ENCODE measurements at regions of chr3 and their contacts with region 1.

Region 1: DNA sequence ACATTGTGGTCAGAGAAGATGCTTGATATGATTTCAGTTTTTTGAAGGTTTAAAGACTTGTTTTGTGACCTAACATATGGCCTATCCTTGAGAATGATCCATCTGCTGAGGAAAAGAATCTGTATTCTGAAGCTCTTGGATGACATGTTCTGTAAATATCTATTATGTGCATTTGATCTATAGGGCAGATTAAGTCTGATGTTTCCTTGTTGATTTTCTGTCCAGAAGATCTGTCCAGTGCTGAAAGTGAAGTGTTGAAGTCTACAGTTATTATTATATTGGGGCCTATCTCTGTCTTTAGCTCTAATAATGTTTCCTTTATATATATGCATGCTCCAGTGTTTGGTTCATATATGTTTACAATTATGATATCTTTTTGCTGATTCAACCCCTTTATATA is 362.8 kb downstream of the EPHA6 start:
- DNase-seq: no peak
- H3K4me3 ChIP-seq: no peak overlapping the region
- H3K27ac ChIP-seq: no peak overlapping the region
- H3K4me1 ChIP-seq: no peaks in the 10 kb centered on the region
- H3K27me3 ChIP-seq: no peaks in the 10 kb centered on the region
- CTCF ChIP-seq: no peak

Region 2: DNA sequence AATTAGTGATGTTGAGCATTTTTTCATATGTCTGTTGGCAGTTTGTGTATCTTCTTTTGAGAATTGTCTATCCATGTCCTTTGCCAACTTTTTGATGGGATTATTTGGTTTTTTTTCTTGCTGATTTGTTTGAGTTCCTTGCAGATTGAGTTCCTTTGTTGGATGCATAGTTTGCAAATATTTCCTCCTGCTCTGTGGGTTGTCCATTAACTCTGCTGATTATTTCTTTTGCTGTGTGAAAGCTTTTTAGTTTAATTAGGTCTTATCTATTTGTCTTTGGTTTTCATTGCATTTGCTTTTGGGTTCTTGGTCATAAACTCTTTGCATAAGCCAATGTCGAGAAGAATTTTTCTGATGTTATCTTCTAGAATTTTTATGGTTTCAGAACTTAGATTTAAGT is 51.7 kb after region 1 on chr3:
- CTCF ChIA-PET with region 1: no interaction called
- POLR2A ChIA-PET with region 1: no interaction called
- intact Hi-C with region 1: loop called (anchors 5 kb)
- DNase-seq: no peak
- H3K4me3 ChIP-seq: no peak overlapping the region
- H3K27ac ChIP-seq: no peak overlapping the region
- H3K4me1 ChIP-seq: no peaks in the 10 kb centered on the region
- H3K27me3 ChIP-seq: no peaks in the 10 kb centered on the region
- CTCF ChIP-seq: no peak